HCT116 (cell line): ENCODE measurements at regions of chr11 and their contacts with region 1.

Region 1: GRCh38 chr11:18634140-18635032 is at the start of gene SPTY2D1:
- DNase-seq: peak; percentile 99
- ATAC-seq: peak; percentile 98
- H3K4me3 ChIP-seq: peak within 1 kb of the TSS; percentile 92 to 97
- H3K27ac ChIP-seq: peak within 1 kb of the TSS; percentile 63
- H3K4me1 ChIP-seq: peaks cover 6 to 16% of the 10 kb centered on the region in 2 experiments
- H3K27me3 ChIP-seq: no peaks in the 10 kb centered on the region
- CTCF ChIP-seq: no peak
- POLR2A ChIP-seq: peak; percentile 91
- RAD21 ChIP-seq: no peak
- total RNA-seq, gene SPTY2D1: 19.7 TPM

Region 2: DNA sequence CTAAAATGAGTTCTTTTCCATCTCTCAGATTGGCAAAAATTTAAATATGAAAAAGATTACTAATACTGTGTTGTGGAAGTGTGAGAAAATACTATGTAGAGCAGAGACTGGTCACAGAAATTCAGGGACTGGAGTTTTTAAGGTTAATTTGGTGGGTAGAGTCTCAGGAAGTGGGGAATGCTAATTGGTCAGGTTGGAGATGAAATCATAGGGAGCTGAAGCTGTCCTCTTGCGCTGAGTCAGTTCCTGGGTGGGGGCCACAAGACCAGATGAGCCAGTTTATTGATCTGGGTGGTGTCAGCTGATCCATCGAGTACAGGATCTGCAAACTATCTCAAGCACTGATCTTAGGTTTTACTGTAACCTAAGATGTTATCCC is 34.8 kb after region 1 on chr11:
- CTCF ChIA-PET with region 1: no interaction called
- POLR2A ChIA-PET with region 1: no interaction called
- RAD21 ChIA-PET with region 1: no interaction called
- intact Hi-C with region 1: loop called (anchors 2 kb)
- DNase-seq: peak; percentile 46
- ATAC-seq: peak; percentile 71
- H3K4me3 ChIP-seq: peak overlapping the region; percentile 17 to 34; a peak in 3 of 4 replicates
- H3K27ac ChIP-seq: peak overlapping the region; percentile 56
- H3K4me1 ChIP-seq: peaks cover 14 to 31% of the 10 kb centered on the region in 2 experiments
- H3K27me3 ChIP-seq: no peaks in the 10 kb centered on the region
- CTCF ChIP-seq: no peak
- POLR2A ChIP-seq: no peak
- RAD21 ChIP-seq: no peak